ENCODE measurements at regions of chr9 and their contacts with region 1.

Region 1: GRCh38 chr9:35277628-35278359 is 116.0 kb downstream of the UNC13B start:
- DNase-seq: no peak
- H3K4me3 ChIP-seq: no peak overlapping the region
- H3K27ac ChIP-seq: peak overlapping the region in 1 of 2 donors; percentile 36
- H3K4me1 ChIP-seq: no peaks in the 10 kb centered on the region
- H3K27me3 ChIP-seq: no peaks in the 10 kb centered on the region
- CTCF ChIP-seq: no peak
- POLR2A ChIP-seq: no peak

Region 2: GRCh38 chr9:35333551-35333950 is 55.8 kb after region 1 on chr9:
- intact Hi-C with region 1: loop called (anchors 10 kb)
- DNase-seq: no peak
- H3K4me3 ChIP-seq: no peak overlapping the region
- H3K27ac ChIP-seq: no peak overlapping the region
- H3K4me1 ChIP-seq: no peaks in the 10 kb centered on the region
- H3K27me3 ChIP-seq: no peaks in the 10 kb centered on the region
- CTCF ChIP-seq: no peak
- POLR2A ChIP-seq: no peak

Region 3: DNA sequence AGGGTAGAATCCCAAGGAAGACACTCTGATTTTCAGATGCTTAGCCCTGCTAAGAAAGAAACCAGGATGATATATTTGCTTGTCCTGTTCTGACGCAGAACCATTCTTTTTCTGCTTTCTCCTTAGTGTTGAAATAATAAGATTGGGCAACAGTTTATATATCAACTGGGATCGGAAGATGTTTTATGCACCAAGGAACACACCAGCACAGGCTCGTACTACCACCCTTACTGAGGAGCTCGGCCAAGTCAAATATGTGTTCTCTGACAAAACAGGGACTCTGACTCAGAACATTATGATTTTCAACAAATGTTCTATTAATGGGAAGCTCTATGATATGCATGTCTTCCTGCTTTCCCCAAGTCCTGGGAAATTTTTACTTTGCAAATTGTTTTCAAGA is 193.1 kb after region 1 on chr9:
- intact Hi-C with region 1: loop called (anchors 5 kb)
- DNase-seq: peak; percentile 66
- H3K4me3 ChIP-seq: no peak overlapping the region
- H3K27ac ChIP-seq: peak overlapping the region; percentile 30 to 49
- H3K4me1 ChIP-seq: no peaks in the 10 kb centered on the region
- H3K27me3 ChIP-seq: no peaks in the 10 kb centered on the region
- CTCF ChIP-seq: no peak
- POLR2A ChIP-seq: no peak

Region 4: GRCh38 chr9:35553670-35554543 is 276.1 kb after region 1 on chr9:
- intact Hi-C with region 1: loop called (anchors 10 kb)
- DNase-seq: peak; percentile 44
- H3K4me3 ChIP-seq: no peak overlapping the region
- H3K27ac ChIP-seq: peak overlapping the region in 1 of 2 donors; percentile 61
- H3K4me1 ChIP-seq: no peaks in the 10 kb centered on the region
- H3K27me3 ChIP-seq: no peaks in the 10 kb centered on the region
- CTCF ChIP-seq: peak; percentile 31 to 84 (median 82)
- POLR2A ChIP-seq: no peak